Left ventricle myocardium inferior (tissue), 1 donor: ENCODE measurements at regions of chr5 and their contacts with region 1.

Region 1: DNA sequence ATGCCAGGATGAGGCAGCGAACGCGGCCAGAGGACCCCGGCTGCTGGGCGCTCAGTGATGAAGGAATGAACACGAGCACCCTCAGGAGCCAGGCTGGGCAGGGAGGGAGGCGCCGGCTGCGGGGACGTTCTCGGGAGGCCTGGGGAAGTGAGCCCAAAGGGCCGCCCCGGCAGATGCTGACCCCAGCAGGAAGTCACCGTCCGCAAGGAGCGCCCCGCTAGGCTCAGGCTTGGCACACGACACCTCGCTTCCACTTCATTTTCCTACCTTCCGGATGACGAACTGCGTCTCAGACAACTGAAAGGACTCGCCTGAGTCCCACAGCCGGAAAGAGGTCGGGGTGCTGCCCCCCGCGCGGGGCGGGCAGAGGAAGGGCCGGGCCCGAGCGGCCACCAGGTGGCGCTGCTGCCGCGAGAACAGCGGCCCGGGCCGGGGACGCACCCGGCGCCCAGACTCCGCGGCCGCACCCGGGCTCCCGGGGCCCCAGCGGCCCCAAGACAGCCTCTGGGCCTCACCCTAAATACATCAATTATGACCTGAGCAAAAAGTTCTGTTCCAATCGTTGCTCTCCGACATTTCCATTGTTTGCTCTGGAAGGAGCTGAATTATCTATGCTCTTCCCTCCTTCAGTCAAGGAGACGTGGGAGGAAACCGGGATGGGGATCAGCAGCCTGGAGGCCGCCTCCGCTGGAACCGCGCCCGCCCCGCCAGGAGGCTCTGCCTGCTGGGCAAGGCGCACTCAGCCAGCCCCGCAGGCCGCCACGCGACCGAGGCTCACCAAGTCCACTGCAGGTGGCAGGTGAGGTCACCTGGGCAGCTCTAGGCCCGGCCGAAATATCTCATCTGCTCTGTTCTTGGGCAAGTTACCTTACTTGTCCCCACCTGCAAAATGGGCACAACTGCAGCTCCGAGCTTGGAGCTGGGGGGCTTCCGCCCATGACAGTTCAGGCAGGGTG is 107.0 kb downstream of the ZNF354C start:
- DNase-seq: peak; percentile 36
- H3K4me3 ChIP-seq: peak overlapping the region; percentile 54
- H3K27ac ChIP-seq: no peak overlapping the region
- H3K4me1 ChIP-seq: peaks cover 11% of the 10 kb centered on the region
- H3K27me3 ChIP-seq: peaks cover 63% of the 10 kb centered on the region
- CTCF ChIP-seq: peak; percentile 98

Region 2: DNA sequence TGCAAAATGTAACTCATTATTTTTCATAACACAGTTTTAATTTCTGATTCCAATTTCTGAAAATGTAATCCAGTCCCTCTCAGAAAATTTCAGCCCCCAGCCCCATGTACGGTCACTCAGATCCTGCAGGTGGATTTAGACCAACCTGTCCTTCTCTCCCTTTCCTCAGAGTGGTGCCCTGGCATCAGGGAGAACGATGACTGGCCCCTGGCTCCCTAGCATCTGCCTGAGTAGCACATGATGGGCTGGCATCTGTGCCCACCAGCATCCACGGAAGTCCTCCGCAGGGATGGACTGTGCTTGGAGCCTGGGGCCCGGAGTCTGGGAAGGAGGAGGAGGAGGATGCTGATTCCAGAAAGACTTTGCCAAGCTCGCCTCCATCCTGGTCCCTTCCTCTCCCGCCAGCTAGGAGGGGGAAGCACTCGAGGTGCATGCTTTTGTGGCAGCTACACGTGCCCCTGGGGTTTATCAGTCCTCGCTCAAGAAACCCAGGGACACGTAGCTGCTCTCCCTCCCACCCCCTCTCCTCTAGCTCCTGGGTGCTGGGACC is 328.8 kb after region 1 on chr5:
- intact Hi-C with region 1: loop called (anchors 2 kb)
- DNase-seq: no peak
- H3K4me3 ChIP-seq: no peak overlapping the region
- H3K27ac ChIP-seq: no peak overlapping the region
- H3K4me1 ChIP-seq: no peaks in the 10 kb centered on the region
- H3K27me3 ChIP-seq: peaks cover 69% of the 10 kb centered on the region
- CTCF ChIP-seq: no peak